Activated T-helper 1 cell treated with anti-CD3 and anti-CD28 coated beads, Interleukin-12 subunit alpha, Interleukin-12 subunit beta, Interleukin-2, Interleukin-4 antibody, amounts not matched to agents 30 ng/mL and 10 ng/mL and 1 ng/mL, durations not matched to agents 14 hours and 24 hours and 36 hours (primary cell): ENCODE measurements at regions of chr2 and their contacts with region 1.

Region 1: GRCh38 chr2:207529330-207530159 is at the start of gene CREB1:
- DNase-seq: peak; percentile 100
- H3K4me3 Mint-ChIP-seq: peak within 1 kb of the TSS; percentile 99
- H3K27ac Mint-ChIP-seq: peak within 1 kb of the TSS; percentile 100
- H3K4me1 Mint-ChIP-seq: peaks cover 52% of the 10 kb centered on the region
- H3K27me3 Mint-ChIP-seq: no peaks in the 10 kb centered on the region
- total RNA-seq, gene CREB1: 98.2 and 111 TPM in 2 replicates

Region 2: GRCh38 chr2:206765242-206766056 is 764.1 kb before region 1 on chr2 and contains the starts of genes FASTKD2 and MDH1B:
- intact Hi-C with region 1: loop called (anchors 1 kb)
- DNase-seq: peak; percentile 80
- H3K4me3 Mint-ChIP-seq: peak within 1 kb of the TSS; percentile 97
- H3K27ac Mint-ChIP-seq: peak within 1 kb of the TSS; percentile 98
- H3K4me1 Mint-ChIP-seq: peaks cover 30% of the 10 kb centered on the region
- H3K27me3 Mint-ChIP-seq: peaks cover 4% of the 10 kb centered on the region
- total RNA-seq, gene FASTKD2: 32.8 and 36.7 TPM in 2 replicates
- total RNA-seq, gene MDH1B: 0.20 and 0.36 TPM in 2 replicates

Region 3: GRCh38 chr2:207334624-207335371 is 194.7 kb before region 1 on chr2:
- intact Hi-C with region 1: loop called (anchors 2 kb)
- DNase-seq: no peak
- H3K4me3 Mint-ChIP-seq: peak overlapping the region; percentile 28
- H3K27ac Mint-ChIP-seq: peak overlapping the region; percentile 88
- H3K4me1 Mint-ChIP-seq: peaks cover 82% of the 10 kb centered on the region
- H3K27me3 Mint-ChIP-seq: no peaks in the 10 kb centered on the region

Region 4: GRCh38 chr2:207505728-207506127 is 23.8 kb before region 1 on chr2:
- intact Hi-C with region 1: loop called (anchors 1 kb)
- DNase-seq: no peak
- H3K4me3 Mint-ChIP-seq: peak overlapping the region; percentile 11
- H3K27ac Mint-ChIP-seq: peak overlapping the region; percentile 30
- H3K4me1 Mint-ChIP-seq: peaks cover 62% of the 10 kb centered on the region
- H3K27me3 Mint-ChIP-seq: no peaks in the 10 kb centered on the region

Region 5: DNA sequence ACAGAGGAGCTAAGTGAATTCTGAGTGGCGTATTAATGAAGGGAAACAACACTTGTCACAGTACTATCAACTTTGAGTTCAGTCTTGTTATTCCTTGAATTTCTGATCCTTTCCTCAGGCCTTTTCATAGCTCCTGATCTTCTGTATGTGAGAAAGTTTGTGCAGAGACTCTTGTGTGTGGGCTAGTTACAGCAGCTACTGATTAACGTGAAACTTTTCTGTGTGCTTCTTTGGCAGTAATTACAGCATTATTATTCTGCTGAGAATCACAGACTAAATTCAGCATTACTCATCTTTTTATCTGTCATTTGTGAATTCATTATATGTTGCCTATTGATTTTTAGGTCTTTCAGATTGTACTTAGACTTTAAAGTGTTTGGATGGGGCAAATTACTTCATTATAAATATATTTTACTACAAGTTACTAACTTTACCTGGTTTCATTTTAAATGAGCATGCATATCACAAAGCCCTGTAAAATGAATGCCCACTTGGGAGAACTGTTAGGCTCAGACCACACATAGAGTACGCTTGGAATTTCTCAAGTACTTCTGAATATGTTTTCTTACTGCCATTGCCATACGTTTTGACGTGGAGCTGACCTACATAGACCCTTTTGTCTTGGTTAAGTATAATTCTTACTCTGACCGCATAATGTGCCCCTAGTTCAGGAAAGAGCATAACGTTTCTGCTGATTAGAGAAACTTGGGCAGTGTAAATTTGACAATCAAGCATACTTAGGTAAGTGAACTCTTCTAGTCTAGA is 36.4 kb after region 1 on chr2:
- intact Hi-C with region 1: loop called (anchors 5 kb)
- DNase-seq: no peak
- H3K4me3 Mint-ChIP-seq: no peak overlapping the region
- H3K27ac Mint-ChIP-seq: peak overlapping the region; percentile 5
- H3K4me1 Mint-ChIP-seq: peaks cover 12% of the 10 kb centered on the region
- H3K27me3 Mint-ChIP-seq: no peaks in the 10 kb centered on the region

Region 6: GRCh38 chr2:208025037-208025813 is 495.7 kb after region 1 on chr2 and contains the start of gene PLEKHM3:
- intact Hi-C with region 1: loop called (anchors 2 kb)
- DNase-seq: peak; percentile 73
- H3K4me3 Mint-ChIP-seq: peak within 1 kb of the TSS; percentile 95
- H3K27ac Mint-ChIP-seq: peak within 1 kb of the TSS; percentile 79
- H3K4me1 Mint-ChIP-seq: peaks cover 17% of the 10 kb centered on the region
- H3K27me3 Mint-ChIP-seq: no peaks in the 10 kb centered on the region
- total RNA-seq, gene PLEKHM3: 6.4 and 7.3 TPM in 2 replicates